Heart left ventricle (tissue), 16 donors: ENCODE measurements at regions of chr10 and their contacts with region 1.

Region 1: DNA sequence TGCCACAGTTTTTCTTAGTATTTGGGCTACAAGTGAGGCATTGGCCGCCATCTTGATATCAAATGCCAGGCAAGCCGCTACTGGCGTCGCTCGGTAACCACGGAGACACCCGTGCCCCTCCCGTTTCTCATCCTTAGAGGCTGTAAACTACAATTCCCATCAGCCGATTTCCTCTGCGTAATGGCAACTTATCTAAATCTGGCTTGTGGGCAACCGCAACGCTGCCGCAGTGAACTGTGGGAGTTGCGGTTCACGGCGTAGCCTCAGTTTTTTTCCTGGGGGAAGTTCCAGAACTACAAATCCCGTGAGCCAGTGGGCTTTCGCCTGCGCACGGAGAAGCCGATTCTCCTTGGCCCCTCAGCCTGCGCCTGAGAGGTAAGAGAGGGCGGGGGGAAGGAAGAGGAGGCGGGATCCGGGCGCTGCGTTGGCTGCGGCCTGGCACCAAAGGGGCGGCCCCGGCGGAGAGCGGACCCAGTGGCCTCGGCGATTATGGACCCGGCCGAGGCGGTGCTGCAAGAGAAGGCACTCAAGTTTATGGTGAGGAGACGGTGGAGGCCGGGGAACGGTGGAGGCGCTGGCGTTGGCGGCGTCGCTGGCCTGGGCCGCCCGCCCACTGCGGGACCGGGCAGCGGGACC is at the start of gene BTRC:
- DNase-seq: peak; percentile 96 to 98 (median 97)
- ATAC-seq: peak; percentile 98 to 99 (median 98)
- H3K4me3 ChIP-seq: peak within 1 kb of the TSS; percentile 55 to 98 (median 94)
- H3K27ac ChIP-seq: peak within 1 kb of the TSS; percentile 45 to 96 (median 91)
- H3K4me1 ChIP-seq: peaks cover 0 to 42% (median 19%) of the 10 kb centered on the region in 12 donors
- H3K27me3 ChIP-seq: peaks cover 0 to 1% (median 0%) of the 10 kb centered on the region in 9 donors
- CTCF ChIP-seq: no peak
- POLR2A ChIP-seq: peak in 1 of 2 donors; percentile 91
- total RNA-seq, gene BTRC: 21.2 to 53.5 (median 35.0) TPM

Region 2: GRCh38 chr10:101446947-101447346 is 93.1 kb after region 1 on chr10:
- intact Hi-C with region 1: loop called in 5 of 10 experiments (anchors 2 to 10 kb)
- DNase-seq: peak in 4 of 5 donors; percentile 17 to 57 (median 41)
- ATAC-seq: peak; percentile 66 to 94 (median 84)
- H3K4me3 ChIP-seq: no peak overlapping the region
- H3K27ac ChIP-seq: peak overlapping the region in 10 of 12 donors; percentile 18 to 76 (median 55)
- H3K4me1 ChIP-seq: peaks cover 0 to 50% (median 20%) of the 10 kb centered on the region in 12 donors
- H3K27me3 ChIP-seq: no peaks in the 10 kb centered on the region
- CTCF ChIP-seq: no peak
- POLR2A ChIP-seq: no peak

Region 3: GRCh38 chr10:101587725-101588653 is 234.2 kb after region 1 on chr10 and contains the starts of genes DPCD and POLL:
- intact Hi-C with region 1: loop called in 1 of 10 experiments (anchors 5 kb)
- DNase-seq: peak; percentile 97 to 99 (median 98)
- ATAC-seq: peak; percentile 95 to 99 (median 98)
- H3K4me3 ChIP-seq: peak within 1 kb of the TSS; percentile 54 to 98 (median 78)
- H3K27ac ChIP-seq: peak within 1 kb of the TSS; percentile 20 to 83 (median 72)
- H3K4me1 ChIP-seq: peaks cover 0 to 30% (median 18%) of the 10 kb centered on the region in 12 donors
- H3K27me3 ChIP-seq: no peaks in the 10 kb centered on the region
- CTCF ChIP-seq: no peak
- POLR2A ChIP-seq: peak in 1 of 2 donors; percentile 53
- total RNA-seq, gene DPCD: 16.3 to 42.9 (median 23.2) TPM
- total RNA-seq, gene POLL: 12.3 to 21.6 (median 18.0) TPM